Dorsolateral prefrontal cortex (tissue), 120 donors: ENCODE measurements at regions of chr11 and their contacts with region 1.

Region 1: GRCh38 chr11:11528986-11529385 is 92.8 kb downstream of the GALNT18 start:
- DNase-seq: no peak
- H3K4me3 ChIP-seq: no peak overlapping the region
- H3K27ac ChIP-seq: no peak overlapping the region
- H3K27me3 ChIP-seq: no peaks in the 10 kb centered on the region
- CTCF ChIP-seq: no peak

Region 2: GRCh38 chr11:11366793-11367192 is 162.2 kb before region 1 on chr11:
- intact Hi-C with region 1: no loop called
- DNase-seq: no peak
- H3K4me3 ChIP-seq: no peak overlapping the region
- H3K27ac ChIP-seq: no peak overlapping the region
- H3K27me3 ChIP-seq: no peaks in the 10 kb centered on the region
- CTCF ChIP-seq: no peak

Region 3: DNA sequence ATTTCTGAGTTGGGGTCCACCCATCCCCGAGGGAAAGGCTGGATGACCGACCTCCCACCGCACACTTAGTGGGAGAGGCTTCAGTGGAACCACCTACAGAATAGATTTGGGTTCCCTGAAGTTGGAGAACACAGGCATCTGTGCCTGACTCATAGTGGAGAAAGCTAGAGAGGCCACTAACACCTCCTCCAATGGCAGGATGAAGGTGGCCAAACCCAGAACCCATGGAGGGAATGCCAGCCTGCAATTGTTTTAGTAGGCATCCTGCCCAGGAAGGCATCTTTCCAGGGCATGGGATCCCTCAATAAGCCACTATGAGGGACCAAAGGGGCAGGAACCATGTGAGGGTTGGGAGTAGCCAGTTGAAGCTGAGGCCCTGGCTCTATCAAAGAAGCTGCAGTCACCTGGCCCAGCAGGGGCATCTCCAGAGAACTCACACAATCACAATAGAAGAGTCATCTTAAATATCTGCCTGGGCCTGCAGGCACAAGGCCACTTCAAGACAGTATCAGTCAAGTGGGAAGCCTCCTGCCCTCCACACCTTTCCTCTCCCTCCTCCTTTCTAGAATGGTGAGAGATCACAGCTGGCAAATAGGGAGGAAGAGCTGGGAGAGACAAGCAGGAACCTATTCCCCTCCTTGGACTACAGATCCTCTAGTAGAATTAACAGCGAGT is 51.9 kb before region 1 on chr11:
- intact Hi-C with region 1: loop called in 1 of 2 experiments (anchors 2 kb)
- DNase-seq: peak in 4 of 10 donors; percentile 38 to 54 (median 46)
- H3K4me3 ChIP-seq: no peak overlapping the region
- H3K27ac ChIP-seq: peak overlapping the region in 9 of 59 donors; percentile 11 to 59 (median 39)
- H3K27me3 ChIP-seq: no peaks in the 10 kb centered on the region
- CTCF ChIP-seq: no peak